Spleen (tissue), 13 donors: ENCODE measurements at regions of chr18 and their contacts with region 1.

Region 1: DNA sequence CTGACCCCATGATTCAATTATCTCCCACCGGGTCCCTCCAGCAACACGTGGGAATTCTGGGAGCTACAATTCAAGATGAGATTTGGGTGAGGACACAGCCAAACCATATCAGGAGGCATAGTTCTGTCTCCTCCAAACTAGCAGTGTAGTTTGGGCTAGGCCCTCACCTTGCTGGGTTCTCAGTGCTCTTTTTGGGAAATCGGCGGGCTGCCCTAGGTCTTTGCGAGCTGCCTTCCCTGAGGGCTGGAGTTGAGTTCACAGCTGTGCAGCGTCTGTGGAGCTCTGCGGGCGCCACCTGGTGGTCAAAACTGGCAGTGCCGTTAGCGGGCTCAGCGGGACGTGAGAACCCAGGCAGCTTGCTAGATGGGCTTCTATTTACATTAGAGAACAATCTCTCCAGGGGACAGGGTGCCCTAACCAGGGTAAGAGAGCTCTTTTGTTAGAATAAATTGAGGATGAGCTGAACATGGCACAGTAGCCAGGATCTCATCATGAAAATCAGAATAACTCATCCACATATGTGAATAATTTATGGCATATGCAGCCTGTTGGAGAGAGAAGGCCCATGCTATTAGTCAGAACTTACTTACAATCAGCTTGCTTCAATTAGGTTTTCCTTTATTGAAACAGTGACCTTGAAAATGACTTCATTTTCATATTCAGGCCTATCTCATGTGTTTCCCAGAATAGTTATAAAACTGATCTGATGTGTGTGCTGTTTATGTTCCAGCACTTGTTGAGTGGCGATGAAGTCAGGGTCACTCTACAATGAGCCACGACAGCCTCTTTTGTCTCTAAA is 27.4 kb upstream of the YES1 start:
- DNase-seq: peak; percentile 94
- H3K4me3 ChIP-seq: no peak overlapping the region
- H3K27ac ChIP-seq: peak overlapping the region; percentile 16 to 89 (median 80)
- H3K4me1 ChIP-seq: peaks cover 0 to 31% (median 8%) of the 10 kb centered on the region in 6 donors
- H3K27me3 ChIP-seq: peaks cover 0 to 20% (median 0%) of the 10 kb centered on the region in 7 donors
- CTCF ChIP-seq: peak; percentile 78 to 98 (median 96)
- POLR2A ChIP-seq: no peak

Region 2: GRCh38 chr18:744832-745597 is 94.4 kb before region 1 on chr18:
- intact Hi-C with region 1: loop called (anchors 2 kb)
- DNase-seq: no peak
- H3K4me3 ChIP-seq: no peak overlapping the region
- H3K27ac ChIP-seq: no peak overlapping the region
- H3K4me1 ChIP-seq: peaks cover 0 to 8% (median 3%) of the 10 kb centered on the region in 6 donors
- H3K27me3 ChIP-seq: no peaks in the 10 kb centered on the region
- CTCF ChIP-seq: no peak
- POLR2A ChIP-seq: no peak